CD8-positive, alpha-beta T cell (primary cell): ENCODE measurements at regions of chr3 and their contacts with region 1.

Region 1: DNA sequence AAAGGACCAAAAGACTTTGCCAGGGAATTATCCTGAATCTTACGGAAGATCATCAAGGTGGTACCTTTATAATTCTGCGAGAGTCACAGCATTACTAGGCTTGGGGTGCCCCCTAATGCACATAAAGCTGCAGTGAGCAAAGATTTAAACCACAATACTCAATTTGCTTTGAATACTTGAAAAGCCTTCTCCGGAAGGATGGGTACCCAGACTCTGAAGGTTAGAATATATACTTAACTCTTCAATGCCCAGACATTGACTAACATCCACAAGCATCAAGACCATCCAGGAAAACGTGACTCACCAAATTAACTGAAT is 117.8 kb upstream of the KCNH8 start:
- DNase-seq: peak in 3 of 9 experiments; percentile 5 to 29 (median 8)
- ATAC-seq: no peak
- H3K4me3 ChIP-seq: no peak overlapping the region
- H3K4me3 Mint-ChIP-seq: no peak overlapping the region
- H3K27ac ChIP-seq: no peak overlapping the region
- H3K27ac Mint-ChIP-seq: no peak overlapping the region
- H3K4me1 ChIP-seq: no peaks in the 10 kb centered on the region
- H3K4me1 Mint-ChIP-seq: peaks cover 5% of the 10 kb centered on the region
- H3K27me3 ChIP-seq: no peaks in the 10 kb centered on the region
- H3K27me3 Mint-ChIP-seq: no peaks in the 10 kb centered on the region
- CTCF ChIP-seq: no peak

Region 2: GRCh38 chr3:18712713-18713576 is 317.5 kb before region 1 on chr3:
- CTCF ChIA-PET with region 1: no interaction called
- POLR2A ChIA-PET with region 1: no interaction called
- intact Hi-C with region 1: no loop called
- DNase-seq: peak in 2 of 9 experiments; percentile 25 to 58
- ATAC-seq: peak; percentile 82
- H3K4me3 ChIP-seq: peak overlapping the region in 1 of 2 experiments; percentile 5
- H3K4me3 Mint-ChIP-seq: peak overlapping the region; percentile 35
- H3K27ac ChIP-seq: peak overlapping the region in 1 of 2 experiments; percentile 54
- H3K27ac Mint-ChIP-seq: peak overlapping the region; percentile 92
- H3K4me1 ChIP-seq: peaks cover 56% of the 10 kb centered on the region
- H3K4me1 Mint-ChIP-seq: peaks cover 73% of the 10 kb centered on the region
- H3K27me3 ChIP-seq: no peaks in the 10 kb centered on the region
- H3K27me3 Mint-ChIP-seq: no peaks in the 10 kb centered on the region
- CTCF ChIP-seq: no peak

Region 3: DNA sequence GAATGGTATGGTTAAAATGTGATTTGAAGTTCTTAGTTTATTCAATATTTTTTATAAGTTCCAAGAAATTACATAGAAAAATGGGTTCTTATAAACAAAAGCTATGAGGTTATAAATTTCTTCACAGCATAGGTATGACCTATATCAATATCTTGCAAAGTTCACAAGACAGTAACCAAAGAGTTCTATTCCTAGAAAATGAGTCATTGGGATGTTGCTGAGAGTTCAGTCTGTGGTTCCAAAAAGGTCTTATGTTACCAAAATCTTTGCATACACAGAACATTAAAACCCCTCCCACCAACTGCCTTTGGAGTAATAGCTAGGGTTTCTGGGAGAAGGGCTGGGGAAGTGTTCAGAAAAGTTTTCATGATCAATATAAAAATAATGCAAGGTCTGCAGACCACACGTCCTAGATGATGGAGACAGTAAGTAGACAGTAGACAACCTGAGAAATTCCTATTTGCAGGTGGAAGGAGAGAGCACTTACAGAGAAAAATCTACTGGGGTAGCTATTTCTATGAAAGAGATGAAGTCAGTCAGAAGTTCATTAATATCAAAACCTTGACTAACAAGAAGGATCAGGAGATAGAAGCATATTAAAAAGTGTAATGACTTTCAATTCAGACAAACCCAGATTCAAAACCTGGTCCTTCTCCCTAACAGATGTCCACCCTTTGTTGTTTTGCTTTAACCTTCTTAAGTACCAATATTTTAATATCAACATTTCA is 397.1 kb after region 1 on chr3:
- CTCF ChIA-PET with region 1: no interaction called
- POLR2A ChIA-PET with region 1: no interaction called
- intact Hi-C with region 1: loop called in 1 of 2 experiments (anchors 5 kb)
- DNase-seq: no peak
- ATAC-seq: no peak
- H3K4me3 ChIP-seq: no peak overlapping the region
- H3K4me3 Mint-ChIP-seq: no peak overlapping the region
- H3K27ac ChIP-seq: no peak overlapping the region
- H3K27ac Mint-ChIP-seq: no peak overlapping the region
- H3K4me1 ChIP-seq: no peaks in the 10 kb centered on the region
- H3K4me1 Mint-ChIP-seq: no peaks in the 10 kb centered on the region
- H3K27me3 ChIP-seq: no peaks in the 10 kb centered on the region
- H3K27me3 Mint-ChIP-seq: no peaks in the 10 kb centered on the region
- CTCF ChIP-seq: no peak

Region 4: DNA sequence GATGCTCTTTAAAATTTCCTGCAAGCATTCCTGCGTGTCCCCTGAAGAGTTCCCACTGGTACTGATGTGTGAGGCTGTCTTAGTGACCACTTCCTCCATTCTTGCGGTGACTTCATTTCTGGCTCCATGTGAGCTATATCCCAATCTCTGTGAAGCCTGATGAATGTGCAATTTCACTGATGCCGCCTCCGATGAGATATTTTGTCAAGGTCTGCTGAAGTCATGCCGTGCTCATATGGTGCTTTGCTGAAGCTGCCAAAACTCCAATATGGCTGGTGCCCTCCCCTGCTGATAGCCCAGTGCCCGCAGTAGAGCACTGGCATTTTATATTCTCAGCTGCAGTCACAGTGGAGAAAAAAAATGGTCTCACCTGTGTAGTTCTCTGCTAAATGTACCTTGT is 632.0 kb after region 1 on chr3:
- CTCF ChIA-PET with region 1: no interaction called
- POLR2A ChIA-PET with region 1: no interaction called
- intact Hi-C with region 1: no loop called
- DNase-seq: no peak
- ATAC-seq: no peak
- H3K4me3 ChIP-seq: no peak overlapping the region
- H3K4me3 Mint-ChIP-seq: no peak overlapping the region
- H3K27ac ChIP-seq: no peak overlapping the region
- H3K27ac Mint-ChIP-seq: no peak overlapping the region
- H3K4me1 ChIP-seq: no peaks in the 10 kb centered on the region
- H3K4me1 Mint-ChIP-seq: no peaks in the 10 kb centered on the region
- H3K27me3 ChIP-seq: no peaks in the 10 kb centered on the region
- H3K27me3 Mint-ChIP-seq: no peaks in the 10 kb centered on the region
- CTCF ChIP-seq: no peak